Body of pancreas (tissue), 4 donors: ENCODE measurements at regions of chr16 and their contacts with region 1.

Region 1: DNA sequence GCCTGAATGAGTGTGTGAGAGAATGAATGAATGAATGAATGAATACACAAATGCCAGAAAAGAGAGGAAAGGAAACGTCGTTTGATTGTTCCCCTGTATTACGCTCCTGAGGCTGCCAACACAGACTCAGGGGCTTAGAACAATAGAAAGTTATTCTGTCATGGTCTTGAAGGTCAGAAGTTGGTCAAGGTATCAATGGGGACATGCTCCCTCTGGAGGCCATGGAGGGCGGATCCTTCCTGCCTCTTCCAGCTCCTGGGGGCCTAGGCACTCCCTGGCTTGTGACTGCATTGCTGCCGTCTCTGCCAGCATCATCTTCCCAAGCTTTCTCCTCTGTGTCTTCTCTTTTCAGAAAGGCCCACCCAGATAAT is 1.5 kb upstream of the SLC38A8 start:
- DNase-seq: peak in 1 of 4 donors; percentile 39
- ATAC-seq: no peak
- H3K4me3 ChIP-seq: no peak overlapping the region
- H3K27ac ChIP-seq: no peak overlapping the region
- H3K4me1 ChIP-seq: peaks cover 16% of the 10 kb centered on the region
- H3K27me3 ChIP-seq: no peaks in the 10 kb centered on the region
- CTCF ChIP-seq: peak in 4 of 7 experiments; percentile 24 to 28 (median 26)
- POLR2A ChIP-seq: no peak

Region 2: GRCh38 chr16:83762141-83762991 is 281.7 kb before region 1 on chr16:
- intact Hi-C with region 1: no loop called
- DNase-seq: no peak
- ATAC-seq: no peak
- H3K4me3 ChIP-seq: no peak overlapping the region
- H3K27ac ChIP-seq: no peak overlapping the region
- H3K4me1 ChIP-seq: no peaks in the 10 kb centered on the region
- H3K27me3 ChIP-seq: no peaks in the 10 kb centered on the region
- CTCF ChIP-seq: no peak
- POLR2A ChIP-seq: no peak

Region 3: GRCh38 chr16:83835586-83836566 is 208.2 kb before region 1 on chr16:
- intact Hi-C with region 1: loop called (anchors 10 kb)
- DNase-seq: no peak
- ATAC-seq: no peak
- H3K4me3 ChIP-seq: no peak overlapping the region
- H3K27ac ChIP-seq: no peak overlapping the region
- H3K4me1 ChIP-seq: no peaks in the 10 kb centered on the region
- H3K27me3 ChIP-seq: no peaks in the 10 kb centered on the region
- CTCF ChIP-seq: no peak
- POLR2A ChIP-seq: no peak

Region 4: DNA sequence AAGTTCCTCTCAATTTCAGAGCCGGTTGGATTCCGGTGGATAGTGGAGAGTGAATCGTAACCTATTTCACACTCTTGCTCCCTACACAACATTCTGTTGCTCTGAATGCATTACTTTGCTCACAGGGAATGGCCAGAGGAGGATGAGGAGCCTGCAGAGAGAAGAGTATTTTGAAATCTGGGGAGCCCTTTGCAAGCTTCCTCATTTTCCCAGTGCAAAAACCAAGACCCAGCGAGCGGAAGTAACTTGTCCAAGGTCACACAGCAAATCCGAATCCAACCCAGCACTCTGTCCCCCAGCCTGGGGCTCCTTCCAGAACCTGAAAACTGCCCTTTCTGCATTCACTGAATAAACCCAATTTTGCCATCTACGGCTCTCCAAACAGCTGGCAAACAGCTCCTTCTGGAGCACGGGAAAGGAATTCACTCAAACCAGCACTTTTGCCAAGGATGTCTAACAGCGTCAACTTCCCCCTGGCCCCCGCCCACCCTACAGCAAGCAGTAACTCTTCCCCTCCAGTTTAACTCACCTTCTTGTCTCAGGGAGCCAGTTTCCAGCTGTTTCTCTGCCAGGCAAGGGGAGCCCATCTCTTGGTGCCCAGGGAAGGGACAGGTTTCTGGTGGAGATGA is 195.2 kb after region 1 on chr16:
- intact Hi-C with region 1: no loop called
- DNase-seq: no peak
- ATAC-seq: no peak
- H3K4me3 ChIP-seq: no peak overlapping the region
- H3K27ac ChIP-seq: no peak overlapping the region
- H3K4me1 ChIP-seq: no peaks in the 10 kb centered on the region
- H3K27me3 ChIP-seq: peaks cover 0 to 7% of the 10 kb centered on the region in 2 donors
- CTCF ChIP-seq: no peak
- POLR2A ChIP-seq: no peak

Region 5: GRCh38 chr16:84308120-84308519 is 264.0 kb after region 1 on chr16:
- intact Hi-C with region 1: no loop called
- DNase-seq: peak in 3 of 4 donors; percentile 11 to 31 (median 24)
- ATAC-seq: peak; percentile 21
- H3K4me3 ChIP-seq: no peak overlapping the region
- H3K27ac ChIP-seq: no peak overlapping the region
- H3K4me1 ChIP-seq: no peaks in the 10 kb centered on the region
- H3K27me3 ChIP-seq: peaks cover 0 to 14% of the 10 kb centered on the region in 2 donors
- CTCF ChIP-seq: peak in 4 of 7 experiments; percentile 17 to 35 (median 20)
- POLR2A ChIP-seq: no peak

Region 6: GRCh38 chr16:84464967-84465553 is 421.0 kb after region 1 on chr16:
- intact Hi-C with region 1: no loop called
- DNase-seq: peak in 1 of 4 donors; percentile 5
- ATAC-seq: no peak
- H3K4me3 ChIP-seq: no peak overlapping the region
- H3K27ac ChIP-seq: no peak overlapping the region
- H3K4me1 ChIP-seq: no peaks in the 10 kb centered on the region
- H3K27me3 ChIP-seq: no peaks in the 10 kb centered on the region
- CTCF ChIP-seq: no peak
- POLR2A ChIP-seq: no peak